Calu3 (cell line): ENCODE measurements at regions of chr6 and their contacts with region 1.

Region 1: DNA sequence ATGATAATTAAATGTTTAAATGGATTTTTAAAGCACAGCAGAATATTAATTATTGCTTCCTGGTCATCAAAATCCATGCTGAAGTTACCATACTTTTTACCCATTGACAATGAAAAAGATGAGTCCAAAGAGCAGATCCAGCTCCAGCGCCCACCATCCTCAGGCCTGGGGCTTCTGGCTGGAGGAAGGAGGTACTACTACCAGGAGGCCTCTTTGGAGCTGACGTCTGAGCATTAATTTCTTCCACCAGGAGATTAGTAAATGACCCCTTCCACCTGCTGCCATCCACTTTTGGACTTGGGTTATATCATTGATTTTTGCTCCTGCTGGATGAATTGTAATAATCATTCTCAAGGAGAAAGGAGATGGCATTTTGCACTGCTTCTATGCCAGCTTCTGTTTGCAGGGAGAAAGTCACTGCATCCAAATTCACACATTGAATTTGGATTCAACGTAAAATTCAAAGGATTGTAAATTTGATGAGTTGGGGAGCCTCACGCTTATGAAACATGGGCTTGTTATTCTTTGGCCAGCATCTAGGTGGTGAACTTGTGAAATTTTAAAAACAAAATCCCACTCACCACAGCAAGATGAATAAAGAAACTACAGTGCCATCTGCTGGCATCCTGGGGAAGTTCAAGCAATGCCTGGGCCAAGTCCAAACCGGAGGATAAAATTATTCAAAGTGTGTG is 121.8 kb downstream of the SASH1 start:
- DNase-seq: peak; percentile 59
- H3K4me3 Mint-ChIP-seq: no peak overlapping the region
- H3K27ac Mint-ChIP-seq: no peak overlapping the region
- H3K4me1 Mint-ChIP-seq: peaks cover 24% of the 10 kb centered on the region
- H3K27me3 Mint-ChIP-seq: no peaks in the 10 kb centered on the region
- CTCF ChIP-seq: peak; percentile 74

Region 2: GRCh38 chr6:148177589-148178233 is 286.8 kb before region 1 on chr6:
- CTCF ChIA-PET with region 1: no interaction called
- intact Hi-C with region 1: loop called (anchors 1 kb)
- DNase-seq: peak; percentile 57
- H3K4me3 Mint-ChIP-seq: no peak overlapping the region
- H3K27ac Mint-ChIP-seq: no peak overlapping the region
- H3K4me1 Mint-ChIP-seq: no peaks in the 10 kb centered on the region
- H3K27me3 Mint-ChIP-seq: no peaks in the 10 kb centered on the region
- CTCF ChIP-seq: peak; percentile 77

Region 3: GRCh38 chr6:148192310-148192709 is 272.2 kb before region 1 on chr6:
- CTCF ChIA-PET with region 1: no interaction called
- intact Hi-C with region 1: no loop called
- DNase-seq: no peak
- H3K4me3 Mint-ChIP-seq: no peak overlapping the region
- H3K27ac Mint-ChIP-seq: peak overlapping the region; percentile 54
- H3K4me1 Mint-ChIP-seq: peaks cover 13% of the 10 kb centered on the region
- H3K27me3 Mint-ChIP-seq: no peaks in the 10 kb centered on the region
- CTCF ChIP-seq: no peak

Region 4: DNA sequence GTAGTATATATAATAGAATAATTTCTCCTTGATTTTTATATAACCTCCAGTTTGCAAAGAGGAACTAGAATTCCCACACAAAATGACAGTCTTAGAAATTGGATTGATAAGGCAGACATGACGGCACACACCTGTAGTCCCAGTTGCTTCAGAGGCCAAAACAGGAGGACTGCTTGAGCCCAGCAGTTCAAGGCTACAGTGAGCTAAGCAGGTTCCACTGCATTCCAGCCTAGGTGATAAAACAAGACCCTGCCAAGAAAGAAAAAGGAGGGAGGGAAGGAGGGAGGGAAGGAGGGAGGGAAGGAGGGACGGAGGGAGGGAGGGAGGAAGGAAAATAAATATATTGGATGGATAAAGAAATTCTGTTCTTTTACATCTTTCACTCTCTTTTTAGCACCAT is 199.4 kb before region 1 on chr6:
- CTCF ChIA-PET with region 1: no interaction called
- intact Hi-C with region 1: loop called (anchors 2 kb)
- DNase-seq: peak; percentile 9
- H3K4me3 Mint-ChIP-seq: no peak overlapping the region
- H3K27ac Mint-ChIP-seq: no peak overlapping the region
- H3K4me1 Mint-ChIP-seq: peaks cover 22% of the 10 kb centered on the region
- H3K27me3 Mint-ChIP-seq: no peaks in the 10 kb centered on the region
- CTCF ChIP-seq: no peak

Region 5: GRCh38 chr6:148329596-148330381 is 134.7 kb before region 1 on chr6:
- CTCF ChIA-PET with region 1: no interaction called
- intact Hi-C with region 1: no loop called
- DNase-seq: no peak
- H3K4me3 Mint-ChIP-seq: no peak overlapping the region
- H3K27ac Mint-ChIP-seq: no peak overlapping the region
- H3K4me1 Mint-ChIP-seq: peaks cover 8% of the 10 kb centered on the region
- H3K27me3 Mint-ChIP-seq: no peaks in the 10 kb centered on the region
- CTCF ChIP-seq: no peak

Region 6: GRCh38 chr6:148342357-148343046 is 122.0 kb before region 1 on chr6 and contains the start of gene SASH1:
- CTCF ChIA-PET with region 1: no interaction called
- intact Hi-C with region 1: loop called (anchors 5 kb)
- DNase-seq: peak; percentile 49
- H3K4me3 Mint-ChIP-seq: peak within 1 kb of the TSS; percentile 90
- H3K27ac Mint-ChIP-seq: peak within 1 kb of the TSS; percentile 98
- H3K4me1 Mint-ChIP-seq: peaks cover 18% of the 10 kb centered on the region
- H3K27me3 Mint-ChIP-seq: no peaks in the 10 kb centered on the region
- CTCF ChIP-seq: no peak
- total RNA-seq, gene SASH1: 12.1 and 12.3 TPM in 2 replicates